ENCODE measurements at regions of chr7 and their contacts with region 1.

Region 1: DNA sequence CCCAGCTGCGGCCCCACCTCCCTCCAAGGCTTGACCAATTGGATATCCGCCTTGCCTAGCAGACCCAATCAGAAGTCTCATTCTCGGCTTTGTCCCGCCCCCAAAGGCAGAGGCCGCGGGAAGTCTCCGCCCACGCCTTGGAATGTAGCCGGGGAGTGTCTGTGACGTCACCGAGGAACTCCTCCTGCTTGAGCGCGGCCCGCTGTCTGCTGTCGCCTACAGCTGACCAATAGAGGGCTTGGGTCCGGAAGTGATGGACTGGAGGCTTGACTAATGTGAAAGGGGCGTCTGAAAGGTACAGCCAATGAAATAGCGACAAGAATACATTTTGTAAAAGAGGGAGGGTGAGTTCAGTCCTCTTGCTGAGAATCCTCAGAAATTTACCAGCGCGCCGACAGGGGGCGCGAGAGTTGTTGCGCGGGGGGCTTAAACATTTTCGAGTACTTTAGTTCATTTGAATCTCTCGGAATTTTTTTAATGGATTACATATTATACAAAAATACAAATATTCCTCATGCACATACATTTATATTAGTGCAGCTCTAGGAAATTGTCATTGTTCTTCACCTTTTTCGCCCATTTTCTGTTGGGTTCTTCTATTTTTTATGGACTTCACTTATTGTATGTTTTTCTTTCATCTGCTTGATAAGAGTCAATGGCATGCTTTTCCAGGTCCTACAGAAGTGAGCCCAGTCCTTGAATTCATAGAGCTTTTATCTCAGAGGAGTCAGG is 376 bp upstream of the CREB3L2 start:
- DNase-seq: peak; percentile 99
- H3K4me3 Mint-ChIP-seq: peak overlapping the region; percentile 93
- H3K27ac Mint-ChIP-seq: peak overlapping the region; percentile 62
- H3K4me1 Mint-ChIP-seq: peaks cover 23% of the 10 kb centered on the region
- H3K27me3 Mint-ChIP-seq: no peaks in the 10 kb centered on the region
- CTCF ChIP-seq: peak; percentile 95

Region 2: GRCh38 chr7:137888241-137888640 is 114.0 kb before region 1 on chr7:
- CTCF ChIA-PET with region 1: no interaction called
- POLR2A ChIA-PET with region 1: no interaction called
- intact Hi-C with region 1: no loop called
- DNase-seq: no peak
- H3K4me3 Mint-ChIP-seq: no peak overlapping the region
- H3K27ac Mint-ChIP-seq: no peak overlapping the region
- H3K4me1 Mint-ChIP-seq: peaks cover 7% of the 10 kb centered on the region
- H3K27me3 Mint-ChIP-seq: no peaks in the 10 kb centered on the region
- CTCF ChIP-seq: no peak

Region 3: DNA sequence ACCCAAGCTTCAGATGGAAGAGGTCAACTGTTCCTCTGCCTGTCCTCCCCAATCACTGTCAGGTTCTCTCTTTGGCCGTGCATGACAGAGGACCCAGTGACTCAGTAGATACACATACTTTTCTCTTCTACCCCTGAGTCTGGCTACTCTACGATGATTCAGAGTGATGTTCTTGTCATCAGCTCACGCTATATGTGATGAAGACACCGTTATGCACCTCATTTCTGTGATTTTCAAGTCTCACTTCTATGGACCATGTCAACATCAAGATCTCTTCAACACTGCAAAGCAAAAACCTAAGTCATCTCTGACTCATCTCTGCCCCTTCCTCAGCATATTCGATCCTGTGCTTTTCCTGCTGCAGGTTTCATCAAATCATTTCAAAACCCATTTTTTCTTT is 78.9 kb before region 1 on chr7:
- CTCF ChIA-PET with region 1: interaction called, 563 read pairs
- POLR2A ChIA-PET with region 1: interaction called, 4 read pairs
- intact Hi-C with region 1: loop called (anchors 5 kb)
- DNase-seq: peak; percentile 57
- H3K4me3 Mint-ChIP-seq: no peak overlapping the region
- H3K27ac Mint-ChIP-seq: peak overlapping the region; percentile 14
- H3K4me1 Mint-ChIP-seq: peaks cover 17% of the 10 kb centered on the region
- H3K27me3 Mint-ChIP-seq: no peaks in the 10 kb centered on the region
- CTCF ChIP-seq: no peak

Region 4: GRCh38 chr7:137934941-137935883 is 67.0 kb before region 1 on chr7:
- CTCF ChIA-PET with region 1: interaction called, 14 read pairs
- POLR2A ChIA-PET with region 1: interaction called, 52 read pairs
- intact Hi-C with region 1: no loop called
- DNase-seq: no peak
- H3K4me3 Mint-ChIP-seq: no peak overlapping the region
- H3K27ac Mint-ChIP-seq: no peak overlapping the region
- H3K4me1 Mint-ChIP-seq: peaks cover 48% of the 10 kb centered on the region
- H3K27me3 Mint-ChIP-seq: no peaks in the 10 kb centered on the region
- CTCF ChIP-seq: no peak

Region 5: GRCh38 chr7:137967143-137968018 is 34.9 kb before region 1 on chr7:
- CTCF ChIA-PET with region 1: interaction called, 13 read pairs
- POLR2A ChIA-PET with region 1: interaction called, 6 read pairs
- intact Hi-C with region 1: no loop called
- DNase-seq: peak; percentile 29
- H3K4me3 Mint-ChIP-seq: no peak overlapping the region
- H3K27ac Mint-ChIP-seq: no peak overlapping the region
- H3K4me1 Mint-ChIP-seq: peaks cover 38% of the 10 kb centered on the region
- H3K27me3 Mint-ChIP-seq: no peaks in the 10 kb centered on the region
- CTCF ChIP-seq: no peak

Region 6: DNA sequence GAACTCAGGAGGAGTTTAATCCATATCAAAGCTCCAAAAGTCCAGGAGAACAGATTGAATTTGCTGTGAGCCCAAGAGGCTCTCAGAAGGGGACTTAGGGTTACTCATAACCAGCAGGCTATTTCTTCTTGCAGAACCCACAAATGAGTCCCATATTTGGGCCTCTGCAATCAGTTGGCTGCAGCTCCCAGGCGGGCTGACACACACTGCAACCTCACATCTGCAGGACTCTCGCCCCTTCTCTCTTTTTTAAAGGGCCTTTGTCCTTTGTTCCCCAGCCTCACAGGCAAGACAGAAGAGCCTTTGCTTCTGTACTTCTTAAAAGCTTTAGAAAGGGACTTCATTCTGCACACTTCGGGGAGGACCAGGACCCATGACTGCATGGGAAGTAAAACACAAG is 27.0 kb before region 1 on chr7:
- CTCF ChIA-PET with region 1: interaction called, 18 read pairs
- POLR2A ChIA-PET with region 1: interaction called, 12 read pairs
- intact Hi-C with region 1: no loop called
- DNase-seq: no peak
- H3K4me3 Mint-ChIP-seq: no peak overlapping the region
- H3K27ac Mint-ChIP-seq: no peak overlapping the region
- H3K4me1 Mint-ChIP-seq: peaks cover 24% of the 10 kb centered on the region
- H3K27me3 Mint-ChIP-seq: no peaks in the 10 kb centered on the region
- CTCF ChIP-seq: no peak

Region 7: DNA sequence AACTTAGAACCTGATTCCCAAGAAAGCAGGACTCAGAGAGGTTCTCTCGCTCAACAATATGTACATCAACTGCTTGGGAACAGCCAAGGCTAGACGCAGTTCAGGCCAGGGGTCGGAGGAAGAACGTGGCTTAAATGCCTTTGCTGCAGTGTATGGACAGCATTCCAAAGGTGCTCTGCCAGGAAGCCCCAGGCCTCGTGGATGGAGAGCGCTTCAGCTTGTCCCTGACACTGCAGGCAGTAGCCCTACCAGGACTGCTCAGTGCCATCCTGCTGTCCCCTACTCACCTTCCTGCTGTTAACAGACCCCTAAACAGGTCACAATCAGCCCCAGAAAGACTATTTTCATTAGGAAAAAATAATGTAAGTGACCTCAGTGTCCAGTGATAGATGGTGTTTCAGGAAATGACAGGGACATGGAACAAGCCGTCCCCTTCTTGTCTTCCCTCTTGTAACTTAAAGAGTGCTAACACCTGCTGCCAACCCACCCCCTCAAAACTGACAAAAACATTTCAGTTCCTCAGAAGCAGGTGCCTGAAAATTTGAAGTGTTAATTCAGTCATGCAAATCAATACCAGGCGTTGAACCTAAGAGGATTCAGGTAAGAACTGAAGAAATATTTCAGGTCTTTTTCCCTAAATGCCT is 16.9 kb before region 1 on chr7:
- CTCF ChIA-PET with region 1: interaction called, 23 read pairs
- POLR2A ChIA-PET with region 1: interaction called, 59 read pairs
- intact Hi-C with region 1: no loop called
- DNase-seq: no peak
- H3K4me3 Mint-ChIP-seq: no peak overlapping the region
- H3K27ac Mint-ChIP-seq: no peak overlapping the region
- H3K4me1 Mint-ChIP-seq: peaks cover 14% of the 10 kb centered on the region
- H3K27me3 Mint-ChIP-seq: no peaks in the 10 kb centered on the region
- CTCF ChIP-seq: no peak

Region 8: GRCh38 chr7:138015096-138015495 is 12.8 kb after region 1 on chr7:
- CTCF ChIA-PET with region 1: interaction called, 32 read pairs
- POLR2A ChIA-PET with region 1: interaction called, 5 read pairs
- intact Hi-C with region 1: no loop called
- DNase-seq: no peak
- H3K4me3 Mint-ChIP-seq: no peak overlapping the region
- H3K27ac Mint-ChIP-seq: no peak overlapping the region
- H3K4me1 Mint-ChIP-seq: no peaks in the 10 kb centered on the region
- H3K27me3 Mint-ChIP-seq: no peaks in the 10 kb centered on the region
- CTCF ChIP-seq: no peak

Region 9: GRCh38 chr7:138116141-138116540 is 113.9 kb after region 1 on chr7:
- CTCF ChIA-PET with region 1: no interaction called
- POLR2A ChIA-PET with region 1: no interaction called
- intact Hi-C with region 1: no loop called
- DNase-seq: peak; percentile 39
- H3K4me3 Mint-ChIP-seq: no peak overlapping the region
- H3K27ac Mint-ChIP-seq: no peak overlapping the region
- H3K4me1 Mint-ChIP-seq: peaks cover 13% of the 10 kb centered on the region
- H3K27me3 Mint-ChIP-seq: peaks cover 4% of the 10 kb centered on the region
- CTCF ChIP-seq: no peak

Measured in MCF 10A (cell line).